BJ (cell line): ENCODE measurements at regions of chr5 and their contacts with region 1.

Region 1: GRCh38 chr5:137629646-137630045 is 106.2 kb downstream of the KLHL3 start:
- DNase-seq: no peak
- H3K4me3 ChIP-seq: no peak overlapping the region
- H3K27me3 ChIP-seq: no peaks in the 10 kb centered on the region; the same call in 1 of the 2 replicates
- CTCF ChIP-seq: peak; percentile 82

Region 2: GRCh38 chr5:137220523-137220927 is 409.1 kb before region 1 on chr5:
- CTCF ChIA-PET with region 1: no interaction called
- POLR2A ChIA-PET with region 1: no interaction called
- DNase-seq: peak; percentile 54
- H3K4me3 ChIP-seq: no peak overlapping the region
- H3K27me3 ChIP-seq: no peaks in the 10 kb centered on the region
- CTCF ChIP-seq: peak; percentile 65

Region 3: DNA sequence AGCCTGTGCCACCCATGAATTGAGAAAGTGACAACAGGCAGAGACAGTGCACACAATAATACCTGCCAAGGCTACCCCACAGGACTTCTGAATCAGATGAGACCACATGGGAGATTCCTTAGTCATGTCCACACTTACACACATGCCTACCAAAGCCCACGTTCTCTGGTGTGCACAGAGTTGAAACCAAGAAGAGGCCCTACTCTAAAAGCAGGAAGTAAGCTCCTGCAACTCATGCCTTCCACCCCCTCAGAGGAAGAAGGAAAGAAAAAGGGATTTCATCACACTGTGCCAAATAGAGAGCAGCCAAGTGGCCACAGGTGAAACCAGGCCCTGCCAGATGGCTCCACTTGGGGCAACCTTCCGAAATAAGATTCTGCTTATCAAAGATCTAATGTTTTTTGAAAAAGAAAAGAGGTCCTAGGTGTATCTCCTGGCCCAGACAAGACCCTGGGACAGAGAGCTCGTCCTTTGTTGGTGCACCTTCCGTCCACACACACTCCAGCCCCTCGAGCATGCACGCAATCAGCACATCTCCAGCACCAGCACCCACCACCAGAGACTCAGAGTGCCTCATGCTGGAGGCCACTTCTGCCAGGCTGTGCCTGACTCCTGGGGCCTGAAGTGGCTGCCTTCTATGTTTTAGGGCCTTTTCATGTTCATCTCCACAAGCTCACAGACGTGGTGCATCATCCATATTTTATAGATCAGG is 15.9 kb before region 1 on chr5:
- CTCF ChIA-PET with region 1: interaction called, 30 read pairs
- POLR2A ChIA-PET with region 1: no interaction called
- DNase-seq: no peak
- H3K4me3 ChIP-seq: no peak overlapping the region
- H3K27me3 ChIP-seq: no peaks in the 10 kb centered on the region
- CTCF ChIP-seq: no peak

Region 4: GRCh38 chr5:137619191-137619870 is 10.3 kb before region 1 on chr5:
- CTCF ChIA-PET with region 1: interaction called, 30 read pairs
- POLR2A ChIA-PET with region 1: no interaction called
- DNase-seq: peak; percentile 78
- H3K4me3 ChIP-seq: no peak overlapping the region
- H3K27me3 ChIP-seq: no peaks in the 10 kb centered on the region
- CTCF ChIP-seq: no peak

Region 5: DNA sequence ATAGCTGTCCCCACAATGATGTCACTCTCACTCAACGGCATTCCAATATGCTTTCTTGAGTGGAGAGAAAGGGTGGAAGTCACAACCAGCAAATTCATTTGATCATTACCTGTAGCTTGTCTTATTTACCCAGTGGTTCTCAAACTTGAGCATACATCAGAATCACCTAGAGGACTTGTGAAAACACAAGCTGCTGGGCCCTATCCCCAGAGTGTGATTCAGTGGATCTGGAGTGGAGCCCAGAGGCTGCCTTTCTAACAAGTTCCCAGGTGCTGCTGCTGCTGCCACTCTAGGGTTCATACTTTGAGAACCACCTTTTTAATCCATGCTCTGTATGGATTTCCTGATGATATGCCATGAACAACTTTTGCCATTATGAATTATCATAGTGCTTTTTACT is 11.5 kb after region 1 on chr5:
- CTCF ChIA-PET with region 1: interaction called, 50 read pairs
- POLR2A ChIA-PET with region 1: no interaction called
- DNase-seq: no peak
- H3K4me3 ChIP-seq: no peak overlapping the region
- H3K27me3 ChIP-seq: 0 out of 2 replicates have a peak, but pooled peaks cover 2% of the 10 kb centered on the region
- CTCF ChIP-seq: no peak

Region 6: DNA sequence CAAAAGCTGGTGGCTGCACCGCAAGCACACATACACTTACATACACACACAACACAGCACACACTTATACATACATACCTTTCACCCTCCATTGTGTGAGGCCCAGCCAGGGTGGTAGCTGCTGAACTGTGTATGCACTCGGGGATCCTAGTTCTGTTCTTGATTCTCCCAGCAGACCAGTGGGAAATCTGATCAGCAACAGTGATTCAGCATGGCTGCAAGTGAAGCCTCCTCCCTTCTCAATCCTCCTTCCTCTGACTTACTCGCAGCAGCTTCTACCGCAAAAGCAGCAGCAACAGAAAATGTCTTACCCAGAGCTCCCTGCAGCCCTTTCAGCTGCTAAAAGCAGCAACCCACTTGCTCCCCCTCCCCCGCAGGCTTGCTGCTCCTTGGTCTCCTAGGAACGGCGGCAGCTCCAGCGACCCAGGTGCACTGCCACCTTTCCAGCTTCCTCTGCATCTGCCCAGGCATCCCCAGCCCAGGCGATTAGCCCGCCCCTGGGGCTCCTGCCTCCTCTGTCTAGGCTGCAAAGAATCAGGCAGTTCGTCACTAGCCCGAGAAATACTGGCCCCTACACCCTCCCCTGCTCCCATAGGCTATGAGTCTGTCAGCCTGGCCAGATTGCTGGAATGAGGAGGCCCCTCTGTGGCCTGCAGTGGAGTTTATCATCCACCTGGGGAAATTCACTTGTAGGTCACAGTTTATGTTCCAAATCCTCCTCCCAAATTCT is 106.1 kb after region 1 on chr5 and contains the start of gene KLHL3:
- CTCF ChIA-PET with region 1: interaction called, 141 read pairs
- POLR2A ChIA-PET with region 1: no interaction called
- DNase-seq: no peak
- H3K4me3 ChIP-seq: peak within 1 kb of the TSS; percentile 33
- H3K27me3 ChIP-seq: no peaks in the 10 kb centered on the region
- CTCF ChIP-seq: no peak
- polyA plus RNA-seq, gene KLHL3: 1.1 and 1.3 TPM in 2 replicates

Region 7: GRCh38 chr5:137743031-137743640 is 113.5 kb after region 1 on chr5:
- CTCF ChIA-PET with region 1: interaction called, 141 read pairs
- POLR2A ChIA-PET with region 1: no interaction called
- DNase-seq: no peak
- H3K4me3 ChIP-seq: no peak overlapping the region
- H3K27me3 ChIP-seq: no peaks in the 10 kb centered on the region
- CTCF ChIP-seq: peak; percentile 67

Region 8: DNA sequence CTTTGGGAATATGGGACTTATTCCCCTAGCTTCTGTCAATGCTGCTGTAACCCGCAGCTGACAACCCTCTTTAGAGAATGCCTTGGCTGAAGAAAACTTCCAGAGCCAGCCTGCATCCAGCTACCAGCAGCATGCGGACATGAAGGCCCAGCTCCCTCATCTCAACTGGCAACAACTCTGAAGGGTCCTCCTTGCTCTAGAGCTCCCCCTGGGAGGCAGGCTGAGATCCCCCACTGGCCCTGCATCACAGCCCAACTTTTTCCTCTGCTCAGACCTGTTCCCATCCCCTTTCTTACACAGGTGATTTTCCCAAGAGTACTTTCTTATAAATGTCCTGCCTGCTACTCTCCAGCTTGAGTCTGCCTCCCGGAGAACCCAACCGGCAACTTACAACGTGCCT is 435.5 kb after region 1 on chr5:
- CTCF ChIA-PET with region 1: interaction called, 12 read pairs
- POLR2A ChIA-PET with region 1: interaction called, 43 read pairs
- DNase-seq: no peak
- H3K4me3 ChIP-seq: no peak overlapping the region
- H3K27me3 ChIP-seq: no peaks in the 10 kb centered on the region; the same call in 1 of the 2 replicates
- CTCF ChIP-seq: peak; percentile 36; the same call in 1 of the 2 replicates

Region 9: GRCh38 chr5:138369706-138370105 is 740.1 kb after region 1 on chr5:
- CTCF ChIA-PET with region 1: no interaction called
- POLR2A ChIA-PET with region 1: no interaction called
- DNase-seq: no peak
- H3K4me3 ChIP-seq: no peak overlapping the region
- H3K27me3 ChIP-seq: no peaks in the 10 kb centered on the region
- CTCF ChIP-seq: no peak